ENCODE measurements at regions of chr7 and their contacts with region 1.

Region 1: DNA sequence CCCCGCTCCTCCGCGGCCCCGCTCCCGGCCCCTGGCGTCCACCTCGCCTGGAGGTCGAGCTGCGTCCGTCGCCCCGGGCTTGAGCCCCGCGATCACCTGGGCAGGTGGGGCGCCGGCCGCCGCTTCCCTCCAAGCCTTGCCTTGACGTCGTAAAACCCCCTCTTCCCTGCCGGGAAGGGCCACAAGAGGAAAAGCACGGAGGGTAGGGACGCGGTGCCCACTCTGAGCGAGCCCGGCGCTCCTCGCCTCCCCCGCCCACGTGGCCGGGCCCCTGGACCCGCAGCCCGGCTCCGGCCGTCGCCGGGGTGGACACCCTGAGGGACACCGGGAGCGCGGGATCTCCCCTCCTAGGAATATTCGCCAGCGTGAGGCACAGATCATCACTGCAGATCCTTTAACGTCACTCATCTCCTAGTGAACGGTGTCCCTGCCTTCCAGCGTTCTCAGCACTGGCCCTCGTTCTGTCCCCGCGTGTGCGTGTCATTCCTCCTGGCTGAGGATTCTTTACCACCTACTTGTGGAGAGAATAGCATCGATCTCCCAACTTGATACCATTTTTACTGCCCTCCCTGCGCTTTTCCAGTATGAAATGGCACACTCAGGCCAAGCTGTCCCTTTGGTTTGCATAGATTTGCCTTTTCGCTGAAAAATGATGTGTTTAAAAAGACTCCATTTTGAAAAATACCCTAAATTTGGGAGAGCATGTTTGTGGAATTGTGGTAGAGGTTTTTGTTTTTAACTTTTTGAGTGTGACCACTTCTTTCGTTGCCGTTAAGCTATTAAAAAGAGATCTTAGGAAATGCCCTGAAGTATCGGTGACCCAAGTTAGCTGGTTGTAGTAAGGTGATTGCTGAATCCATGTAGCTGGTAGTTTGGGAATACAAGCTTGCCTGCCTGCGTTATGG is 649 bp downstream of the ACTR3B start:
- DNase-seq: peak; percentile 25
- ATAC-seq: peak; percentile 54
- H3K4me3 ChIP-seq: peak overlapping the region; percentile 90
- H3K27ac ChIP-seq: peak overlapping the region; percentile 90
- H3K4me1 ChIP-seq: peaks cover 14% of the 10 kb centered on the region
- H3K27me3 ChIP-seq: no peaks in the 10 kb centered on the region
- CTCF ChIP-seq: no peak

Region 2: DNA sequence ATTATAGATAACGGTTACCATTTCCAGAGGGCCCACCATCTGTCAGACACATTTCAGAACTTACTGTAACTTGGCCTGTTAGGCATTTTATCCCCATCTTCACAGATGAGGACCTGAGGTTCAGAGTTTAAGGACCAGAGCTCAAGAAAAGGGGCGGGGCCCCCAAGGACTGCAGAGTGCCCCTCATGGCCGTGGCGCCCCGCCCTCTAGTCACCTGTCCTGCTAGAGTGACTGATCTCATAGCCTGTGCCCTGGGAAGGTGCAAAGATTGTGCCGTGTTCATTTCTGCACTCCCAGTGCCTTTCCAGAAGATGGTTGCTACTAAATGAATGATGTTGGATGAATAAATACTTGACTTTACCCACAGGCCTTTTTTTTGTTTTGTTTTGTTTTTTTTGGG is 191.2 kb before region 1 on chr7:
- CTCF ChIA-PET with region 1: no interaction called
- POLR2A ChIA-PET with region 1: no interaction called
- intact Hi-C with region 1: no loop called
- DNase-seq: no peak
- ATAC-seq: no peak
- H3K4me3 ChIP-seq: no peak overlapping the region
- H3K27ac ChIP-seq: no peak overlapping the region
- H3K4me1 ChIP-seq: no peaks in the 10 kb centered on the region
- H3K27me3 ChIP-seq: no peaks in the 10 kb centered on the region
- CTCF ChIP-seq: no peak

Region 3: GRCh38 chr7:152709287-152710152 is 50.7 kb before region 1 on chr7:
- CTCF ChIA-PET with region 1: interaction called, 3 read pairs
- POLR2A ChIA-PET with region 1: no interaction called
- intact Hi-C with region 1: loop called (anchors 1 kb)
- DNase-seq: peak; percentile 44
- ATAC-seq: no peak
- H3K4me3 ChIP-seq: no peak overlapping the region
- H3K27ac ChIP-seq: no peak overlapping the region
- H3K4me1 ChIP-seq: peaks cover 21% of the 10 kb centered on the region
- H3K27me3 ChIP-seq: no peaks in the 10 kb centered on the region
- CTCF ChIP-seq: no peak

Measured in PC-3 (cell line).